ENCODE measurements at regions of chr22 and their contacts with region 1.

Region 1: DNA sequence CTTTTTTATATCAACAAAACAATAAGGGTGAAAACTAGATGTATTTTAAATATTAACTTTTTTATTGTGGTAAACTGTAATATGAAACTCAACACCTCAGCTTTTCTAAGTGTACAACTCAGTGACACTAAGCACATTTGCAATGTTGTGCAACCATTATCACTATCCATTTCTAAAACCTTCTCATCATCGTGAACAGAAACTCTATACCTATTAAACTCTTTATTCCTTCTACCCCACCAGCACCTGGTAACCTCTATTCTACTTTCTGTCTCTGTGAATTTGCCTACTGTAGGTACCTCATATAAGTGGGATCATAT is 9.4 kb downstream of the HORMAD2 start:
- DNase-seq: no peak
- ATAC-seq: no peak
- H3K4me3 ChIP-seq: no peak overlapping the region
- H3K27ac ChIP-seq: no peak overlapping the region
- H3K4me1 ChIP-seq: no peaks in the 10 kb centered on the region
- H3K27me3 ChIP-seq: no peaks in the 10 kb centered on the region
- CTCF ChIP-seq: no peak
- EP300 ChIP-seq: no peak
- POLR2A ChIP-seq: no peak
- RAD21 ChIP-seq: no peak

Region 2: GRCh38 chr22:29626499-29627195 is 463.0 kb before region 1 on chr22:
- CTCF ChIA-PET with region 1: interaction called, 7 read pairs
- POLR2A ChIA-PET with region 1: no interaction called
- in situ Hi-C with region 1: loop called (anchors 10 kb)
- intact Hi-C with region 1: loop called (anchors 2 kb)
- DNase-seq: peak; percentile 15
- ATAC-seq: no peak
- H3K4me3 ChIP-seq: no peak overlapping the region
- H3K27ac ChIP-seq: no peak overlapping the region
- H3K4me1 ChIP-seq: peaks cover 46% of the 10 kb centered on the region
- H3K27me3 ChIP-seq: no peaks in the 10 kb centered on the region
- CTCF ChIP-seq: no peak
- EP300 ChIP-seq: no peak
- POLR2A ChIP-seq: no peak
- RAD21 ChIP-seq: no peak

Region 3: DNA sequence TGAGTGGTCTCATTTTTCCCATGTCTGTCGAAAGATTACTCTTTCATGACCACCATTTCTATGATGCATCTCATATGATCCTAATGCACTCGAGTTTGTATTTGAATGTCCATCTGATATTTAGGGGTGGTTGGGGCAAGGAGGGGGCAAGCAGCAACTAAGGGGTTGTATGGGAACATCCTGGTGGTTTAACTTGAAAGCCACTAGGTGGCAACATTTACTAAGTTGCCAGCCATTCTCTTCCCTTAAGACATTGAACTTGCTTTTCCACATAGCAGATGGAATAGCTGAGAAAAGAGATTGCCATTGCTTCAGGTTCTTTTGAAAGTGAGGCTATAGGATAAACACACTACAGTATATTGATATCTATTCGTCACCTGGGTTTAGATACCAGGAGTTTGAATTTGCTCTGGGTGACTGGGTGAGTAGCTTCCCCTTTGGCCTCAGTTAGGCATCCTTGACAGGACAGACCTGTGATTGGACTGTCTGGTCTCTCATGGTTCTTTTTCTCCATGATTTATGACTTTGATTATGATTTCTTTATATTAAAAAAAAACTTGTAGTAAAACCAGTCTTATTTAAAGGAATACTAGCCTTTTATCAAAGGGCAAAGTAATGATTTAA is 453.8 kb before region 1 on chr22:
- CTCF ChIA-PET with region 1: interaction called, 14 read pairs
- POLR2A ChIA-PET with region 1: no interaction called
- in situ Hi-C with region 1: loop called (anchors 10 kb)
- intact Hi-C with region 1: loop called (anchors 1 kb)
- DNase-seq: peak; percentile 32
- ATAC-seq: peak; percentile 58; the same call in 2 of the 3 replicates
- H3K4me3 ChIP-seq: no peak overlapping the region
- H3K27ac ChIP-seq: no peak overlapping the region
- H3K4me1 ChIP-seq: peaks cover 13% of the 10 kb centered on the region
- H3K27me3 ChIP-seq: no peaks in the 10 kb centered on the region
- CTCF ChIP-seq: peak; percentile 75
- EP300 ChIP-seq: no peak
- POLR2A ChIP-seq: no peak
- RAD21 ChIP-seq: no peak; the same call in 1 of the 2 replicates

Region 4: GRCh38 chr22:29689880-29690213 is 399.8 kb before region 1 on chr22:
- CTCF ChIA-PET with region 1: interaction called, 12 read pairs
- POLR2A ChIA-PET with region 1: no interaction called
- in situ Hi-C with region 1: no loop called
- intact Hi-C with region 1: no loop called
- DNase-seq: peak; percentile 24
- ATAC-seq: peak; percentile 71
- H3K4me3 ChIP-seq: no peak overlapping the region
- H3K27ac ChIP-seq: no peak overlapping the region
- H3K4me1 ChIP-seq: no peaks in the 10 kb centered on the region
- H3K27me3 ChIP-seq: no peaks in the 10 kb centered on the region
- CTCF ChIP-seq: peak; percentile 84
- EP300 ChIP-seq: no peak
- POLR2A ChIP-seq: no peak
- RAD21 ChIP-seq: peak; percentile 61

Region 5: DNA sequence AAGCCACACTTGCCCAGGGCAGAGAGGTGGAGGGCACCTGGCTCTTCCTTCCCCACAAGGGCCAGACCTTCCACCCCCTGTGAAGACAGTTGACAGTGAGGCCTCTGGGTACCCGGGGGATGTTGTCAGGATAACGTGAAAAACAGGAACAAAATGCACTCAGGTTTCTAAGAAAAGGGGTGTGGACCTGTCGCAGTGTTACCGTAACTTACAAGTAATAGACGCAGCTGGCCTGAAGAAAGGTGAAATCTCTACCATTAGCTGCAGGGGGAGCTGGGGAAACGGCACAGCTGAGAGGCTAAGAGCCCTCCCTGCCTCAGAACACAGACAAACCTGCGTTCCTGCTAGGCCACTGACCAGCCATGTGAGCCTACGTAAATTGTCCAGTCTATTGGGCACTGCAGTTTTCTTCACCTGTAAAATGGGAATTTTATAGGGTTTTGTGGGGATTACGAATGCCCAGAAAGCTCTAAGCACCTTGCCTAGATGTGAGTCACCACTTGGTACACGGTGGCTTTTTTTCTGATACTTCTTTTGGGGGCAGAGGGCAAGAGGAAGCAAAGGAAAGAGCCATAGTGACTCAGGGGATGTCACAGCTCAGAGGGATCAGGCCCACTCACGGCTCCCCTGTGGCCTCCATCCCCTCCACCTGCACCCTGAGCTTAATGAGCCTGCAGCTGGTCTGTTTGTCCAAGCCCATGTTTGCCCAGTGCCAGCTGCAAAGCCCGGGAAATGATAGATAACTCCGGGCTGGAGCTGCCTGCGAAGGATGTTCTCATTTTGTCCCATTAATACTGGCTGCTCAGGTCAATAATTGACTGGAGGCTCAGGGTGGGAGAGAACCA is 388.2 kb before region 1 on chr22:
- CTCF ChIA-PET with region 1: no interaction called
- POLR2A ChIA-PET with region 1: no interaction called
- in situ Hi-C with region 1: loop called (anchors 10 kb)
- intact Hi-C with region 1: loop called (anchors 5 kb)
- DNase-seq: peak; percentile 37
- ATAC-seq: peak; percentile 63
- H3K4me3 ChIP-seq: peak overlapping the region in 1 of 3 experiments; percentile 15; a peak in 1 of 6 replicates
- H3K27ac ChIP-seq: no peak overlapping the region
- H3K4me1 ChIP-seq: peaks cover 43% of the 10 kb centered on the region
- H3K27me3 ChIP-seq: peaks cover 0 to 21% of the 10 kb centered on the region in 2 experiments; a peak in 4 of 5 replicates
- CTCF ChIP-seq: peak; percentile 62
- EP300 ChIP-seq: no peak
- POLR2A ChIP-seq: no peak
- RAD21 ChIP-seq: peak; percentile 41; the same call in 1 of the 2 replicates

Region 6: GRCh38 chr22:30116362-30117117 is 26.9 kb after region 1 on chr22:
- CTCF ChIA-PET with region 1: no interaction called
- POLR2A ChIA-PET with region 1: no interaction called
- in situ Hi-C with region 1: no loop called
- intact Hi-C with region 1: no loop called
- DNase-seq: peak; percentile 52
- ATAC-seq: peak; percentile 75
- H3K4me3 ChIP-seq: no peak overlapping the region
- H3K27ac ChIP-seq: no peak overlapping the region
- H3K4me1 ChIP-seq: peaks cover 24% of the 10 kb centered on the region
- H3K27me3 ChIP-seq: no peaks in the 10 kb centered on the region; a peak in 1 of 5 replicates
- CTCF ChIP-seq: no peak
- EP300 ChIP-seq: no peak
- POLR2A ChIP-seq: no peak
- RAD21 ChIP-seq: no peak

Measured in HepG2 (cell line).